ENCODE measurements at regions of chr11 and their contacts with region 1.

Region 1: DNA sequence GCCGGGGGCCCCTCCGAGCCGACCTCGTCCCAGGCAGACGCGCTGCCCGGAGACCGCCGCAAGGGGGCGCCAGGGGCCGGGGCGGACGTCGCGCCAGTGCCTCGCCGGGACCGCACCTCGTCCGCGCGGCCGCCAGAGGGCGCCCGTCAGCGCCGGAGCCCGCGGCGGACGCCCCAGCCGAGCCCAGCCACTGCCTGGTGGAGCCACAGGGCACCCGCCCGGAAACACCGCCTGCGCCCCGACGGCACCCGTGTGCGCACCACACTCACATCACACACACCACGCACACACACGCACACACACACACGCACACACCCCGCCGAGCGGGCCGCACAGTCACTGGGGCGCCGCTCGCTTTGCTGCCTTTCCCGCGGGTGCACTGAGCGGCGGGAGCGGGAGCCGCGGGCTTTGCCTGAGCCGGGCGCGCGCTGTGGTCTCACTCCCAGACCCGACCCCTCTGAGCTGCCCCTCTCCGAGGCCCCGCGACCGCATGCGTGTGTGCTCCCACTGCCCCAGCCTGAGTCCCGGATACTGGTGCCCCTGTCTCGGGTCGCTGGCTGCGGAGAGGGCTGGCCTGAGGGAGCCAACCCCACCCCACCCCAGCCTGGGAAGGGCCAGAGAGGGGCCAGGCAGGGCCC is 449.3 kb downstream of the OPCML start:
- DNase-seq: peak; percentile 31
- H3K4me3 ChIP-seq: peak overlapping the region; percentile 19 to 56 (median 46)
- H3K27ac ChIP-seq: no peak overlapping the region
- H3K4me1 ChIP-seq: no peaks in the 10 kb centered on the region
- H3K27me3 ChIP-seq: peaks cover 3% of the 10 kb centered on the region
- CTCF ChIP-seq: peak; percentile 58 to 77

Region 2: GRCh38 chr11:133134314-133135173 is 51.6 kb after region 1 on chr11:
- CTCF ChIA-PET with region 1: interaction called, 3 read pairs
- dilution Hi-C with region 1: loop called (anchors 5 kb)
- in situ Hi-C with region 1: no loop called
- intact Hi-C with region 1: no loop called
- DNase-seq: peak; percentile 40
- H3K4me3 ChIP-seq: no peak overlapping the region
- H3K27ac ChIP-seq: no peak overlapping the region
- H3K4me1 ChIP-seq: no peaks in the 10 kb centered on the region
- H3K27me3 ChIP-seq: peaks cover 4% of the 10 kb centered on the region
- CTCF ChIP-seq: peak; percentile 89 to 94

Region 3: GRCh38 chr11:133163463-133164419 is 80.8 kb after region 1 on chr11:
- CTCF ChIA-PET with region 1: no interaction called
- dilution Hi-C with region 1: no loop called
- in situ Hi-C with region 1: no loop called
- intact Hi-C with region 1: loop called (anchors 1 kb)
- DNase-seq: peak; percentile 32
- H3K4me3 ChIP-seq: no peak overlapping the region
- H3K27ac ChIP-seq: no peak overlapping the region
- H3K4me1 ChIP-seq: peaks cover 7% of the 10 kb centered on the region
- H3K27me3 ChIP-seq: peaks cover 3% of the 10 kb centered on the region
- CTCF ChIP-seq: peak; percentile 74 to 81

Region 4: GRCh38 chr11:133821776-133822175 is 738.8 kb after region 1 on chr11:
- CTCF ChIA-PET with region 1: no interaction called
- dilution Hi-C with region 1: no loop called
- in situ Hi-C with region 1: loop called in 1 of 2 experiments (anchors 10 kb)
- intact Hi-C with region 1: no loop called
- DNase-seq: no peak
- H3K4me3 ChIP-seq: no peak overlapping the region
- H3K27ac ChIP-seq: no peak overlapping the region
- H3K4me1 ChIP-seq: no peaks in the 10 kb centered on the region
- H3K27me3 ChIP-seq: no peaks in the 10 kb centered on the region
- CTCF ChIP-seq: peak; percentile 51 to 61

Region 5: DNA sequence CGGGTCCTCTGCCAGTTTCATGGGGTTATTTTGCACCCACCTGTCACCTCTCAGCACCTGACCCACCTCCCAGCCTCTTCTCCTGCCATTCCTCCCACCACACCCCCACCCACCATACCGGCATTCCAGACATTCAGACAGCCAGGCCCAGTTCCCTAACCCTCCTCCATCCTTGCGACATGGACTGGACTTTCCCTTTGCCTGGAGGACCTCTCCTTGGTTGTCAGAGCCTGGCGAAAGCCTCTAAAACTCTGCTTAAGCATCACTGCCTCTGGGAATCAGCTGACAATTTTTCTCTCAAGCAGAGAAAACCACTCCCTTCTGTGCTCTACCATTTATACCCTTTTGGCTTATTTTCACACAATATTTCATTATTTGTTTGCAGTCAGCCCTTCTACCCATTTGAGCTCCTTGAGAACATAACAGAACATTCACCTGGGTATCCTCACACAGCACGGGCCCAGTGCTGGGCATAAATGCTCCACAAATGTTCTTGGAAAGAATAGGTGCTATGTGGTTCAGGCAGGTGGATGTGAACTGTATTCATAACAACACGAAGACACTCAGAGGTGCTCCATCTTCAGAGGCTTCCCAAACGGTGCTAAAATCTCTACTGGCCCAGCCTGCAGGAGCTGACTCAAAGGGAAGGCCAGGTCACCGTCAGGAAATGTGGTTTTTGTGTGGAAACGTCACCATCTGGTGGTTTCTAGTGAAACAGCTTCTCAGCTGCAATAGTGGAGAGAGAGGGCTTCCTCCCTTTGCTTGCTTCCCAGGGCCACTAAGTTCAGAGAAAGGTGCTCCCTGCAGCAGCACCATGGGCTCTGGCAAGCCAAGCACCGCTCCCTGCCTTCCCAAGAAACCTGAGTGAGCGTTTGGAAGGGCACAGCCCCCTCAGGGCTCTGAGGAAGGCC is 752.0 kb after region 1 on chr11:
- CTCF ChIA-PET with region 1: no interaction called
- dilution Hi-C with region 1: no loop called
- in situ Hi-C with region 1: no loop called
- intact Hi-C with region 1: loop called (anchors 1 kb)
- DNase-seq: peak; percentile 59
- H3K4me3 ChIP-seq: no peak overlapping the region
- H3K27ac ChIP-seq: no peak overlapping the region
- H3K4me1 ChIP-seq: peaks cover 2% of the 10 kb centered on the region
- H3K27me3 ChIP-seq: no peaks in the 10 kb centered on the region
- CTCF ChIP-seq: peak; percentile 73 to 77